ENCODE measurements at regions of chr4 and their contacts with region 1.

Region 1: DNA sequence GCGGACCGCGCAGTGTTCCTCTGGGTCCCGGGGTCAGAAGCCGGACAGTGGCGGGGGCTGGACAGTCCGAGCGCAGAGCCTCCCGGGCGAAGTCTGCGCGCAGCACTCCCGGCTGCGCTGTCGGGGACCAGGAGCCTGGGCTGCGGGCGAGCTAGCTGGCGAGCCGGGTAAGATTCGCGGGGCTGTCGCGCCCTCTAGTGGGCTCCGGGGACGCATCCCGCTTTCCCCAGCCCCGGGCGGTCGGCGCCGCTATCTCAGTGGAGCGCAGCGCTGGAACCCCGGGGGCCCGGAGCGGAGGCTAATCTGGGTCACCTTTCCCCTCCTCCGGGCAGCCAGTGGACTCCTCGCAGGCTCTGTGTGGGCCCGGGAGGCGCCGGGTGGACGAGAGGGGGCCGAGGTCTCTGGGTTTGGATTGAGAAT is 4.2 kb downstream of the PDGFRA start:
- DNase-seq: peak; percentile 51 to 70 (median 63)
- H3K4me3 ChIP-seq: peak overlapping the region; percentile 64
- H3K4me3 Mint-ChIP-seq: peak overlapping the region; percentile 71 to 93 (median 82)
- H3K27ac ChIP-seq: no peak overlapping the region
- H3K27ac Mint-ChIP-seq: no peak overlapping the region
- H3K4me1 ChIP-seq: peaks cover 10% of the 10 kb centered on the region
- H3K4me1 Mint-ChIP-seq: peaks cover 12 to 27% (median 15%) of the 10 kb centered on the region in 3 donors
- H3K27me3 ChIP-seq: peaks cover 37% of the 10 kb centered on the region
- H3K27me3 Mint-ChIP-seq: peaks cover 51 to 62% of the 10 kb centered on the region in 2 donors

Region 2: DNA sequence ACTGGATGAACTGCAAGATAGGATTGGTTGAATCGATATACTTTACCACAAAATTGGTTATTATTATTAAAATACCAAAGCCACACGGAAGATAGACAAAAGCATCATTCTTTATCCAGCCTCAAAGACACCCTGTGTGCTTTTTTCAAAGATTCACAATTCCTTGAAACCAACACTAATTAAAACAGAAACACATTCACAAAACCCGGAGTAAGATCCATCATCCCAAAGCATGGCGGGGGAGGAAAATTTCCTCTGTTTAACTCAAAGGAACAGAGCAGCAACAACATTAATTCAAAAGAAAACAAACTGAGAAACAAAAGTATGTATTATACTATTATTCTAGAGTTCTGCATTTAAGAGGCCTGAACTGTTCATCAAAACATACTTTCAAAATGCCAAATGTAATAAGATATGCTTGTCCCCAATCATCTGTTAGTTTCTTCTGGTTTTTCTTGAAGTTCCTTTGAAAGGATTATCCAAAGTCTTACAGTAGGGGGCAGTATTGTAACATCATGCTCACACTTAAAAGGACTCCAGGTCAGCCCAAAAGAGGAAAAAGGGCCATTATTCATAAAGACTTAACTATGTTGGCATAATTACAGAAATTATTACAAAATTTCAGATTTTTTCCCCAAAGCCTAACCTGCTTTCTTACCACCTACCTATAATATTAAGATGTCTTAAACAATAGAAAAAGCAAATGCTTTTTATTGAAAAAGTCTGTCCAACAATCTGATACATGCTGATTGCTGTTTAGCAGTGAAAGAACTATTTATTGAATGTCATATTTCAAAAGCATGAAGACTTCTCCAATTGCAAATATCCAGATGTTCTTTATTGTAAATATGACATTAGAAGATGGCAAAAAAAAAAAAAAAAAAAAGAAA is 1036.2 kb before region 1 on chr4:
- CTCF ChIA-PET with region 1: interaction called, 13 read pairs
- POLR2A ChIA-PET with region 1: no interaction called
- DNase-seq: peak in 2 of 5 donors; percentile 31 to 41
- H3K4me3 ChIP-seq: no peak overlapping the region
- H3K4me3 Mint-ChIP-seq: no peak overlapping the region
- H3K27ac ChIP-seq: no peak overlapping the region
- H3K27ac Mint-ChIP-seq: no peak overlapping the region
- H3K4me1 ChIP-seq: no peaks in the 10 kb centered on the region
- H3K4me1 Mint-ChIP-seq: no peaks in the 10 kb centered on the region
- H3K27me3 ChIP-seq: no peaks in the 10 kb centered on the region
- H3K27me3 Mint-ChIP-seq: no peaks in the 10 kb centered on the region

Region 3: DNA sequence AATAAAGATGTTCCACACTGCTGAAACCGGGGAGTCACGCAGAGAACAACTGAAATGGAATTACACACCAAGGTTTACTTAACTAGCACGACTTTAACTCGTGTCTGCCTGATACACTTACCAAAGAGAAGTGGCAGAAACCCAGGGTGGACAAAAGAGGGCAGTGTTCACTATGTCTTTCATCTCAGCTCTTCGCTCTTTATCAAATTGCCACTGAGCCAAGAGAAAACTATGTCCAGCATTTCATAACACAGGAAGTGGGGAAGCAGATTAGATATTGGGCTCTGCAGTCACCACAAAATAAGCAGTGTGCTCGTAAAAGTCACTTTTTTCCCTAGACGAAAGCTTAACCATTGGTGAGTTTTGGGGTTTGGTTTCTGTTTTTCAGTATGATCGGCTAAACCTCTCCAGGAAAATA is 324.6 kb before region 1 on chr4:
- CTCF ChIA-PET with region 1: interaction called, 25 read pairs
- POLR2A ChIA-PET with region 1: no interaction called
- DNase-seq: peak in 1 of 5 donors; percentile 15
- H3K4me3 ChIP-seq: no peak overlapping the region
- H3K4me3 Mint-ChIP-seq: peak overlapping the region in 2 of 7 donors; percentile 5 to 9
- H3K27ac ChIP-seq: no peak overlapping the region
- H3K27ac Mint-ChIP-seq: no peak overlapping the region
- H3K4me1 ChIP-seq: peaks cover 4% of the 10 kb centered on the region
- H3K4me1 Mint-ChIP-seq: peaks cover 8 to 18% (median 17%) of the 10 kb centered on the region in 3 donors
- H3K27me3 ChIP-seq: peaks cover 4% of the 10 kb centered on the region
- H3K27me3 Mint-ChIP-seq: peaks cover 20 to 61% of the 10 kb centered on the region in 2 donors

Region 4: DNA sequence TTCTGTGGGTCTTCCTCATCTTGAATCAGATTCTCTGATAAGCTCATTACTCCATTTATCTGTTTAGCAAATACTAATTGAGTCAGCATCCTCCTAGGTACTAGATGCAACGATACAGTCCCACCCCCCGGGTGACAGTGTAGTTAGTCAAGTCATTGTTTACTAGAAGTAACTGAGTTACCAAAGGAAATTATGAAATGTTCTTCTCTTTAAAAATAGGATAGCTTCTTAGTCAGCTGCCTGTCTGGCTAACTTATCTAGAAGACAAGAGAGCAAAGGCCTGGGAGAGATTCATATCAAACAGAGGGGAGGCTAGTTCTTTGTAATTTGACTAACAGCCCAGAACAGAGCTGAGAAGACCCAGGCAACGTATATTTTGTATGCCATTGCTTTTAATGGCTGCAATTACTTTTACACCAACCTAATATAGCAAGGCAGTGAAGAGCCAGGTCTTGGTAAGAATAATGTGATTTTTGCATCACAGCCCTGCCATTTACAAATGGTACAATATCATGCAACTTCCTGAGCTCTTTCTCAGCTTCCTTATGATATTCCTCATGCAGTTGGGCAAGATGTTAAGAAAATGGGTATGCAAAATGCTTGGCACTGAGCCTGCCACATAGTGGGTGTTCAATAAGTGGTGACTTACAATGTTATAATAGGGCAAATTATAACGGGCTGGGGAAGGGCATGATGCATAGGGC is 318.8 kb before region 1 on chr4:
- CTCF ChIA-PET with region 1: interaction called, 25 read pairs
- POLR2A ChIA-PET with region 1: no interaction called
- DNase-seq: no peak
- H3K4me3 ChIP-seq: no peak overlapping the region
- H3K4me3 Mint-ChIP-seq: no peak overlapping the region
- H3K27ac ChIP-seq: no peak overlapping the region
- H3K27ac Mint-ChIP-seq: no peak overlapping the region
- H3K4me1 ChIP-seq: no peaks in the 10 kb centered on the region
- H3K4me1 Mint-ChIP-seq: no peaks in the 10 kb centered on the region
- H3K27me3 ChIP-seq: no peaks in the 10 kb centered on the region
- H3K27me3 Mint-ChIP-seq: peaks cover under 1 to 7% of the 10 kb centered on the region in 2 donors

Region 5: GRCh38 chr4:53929955-53930798 is 303.1 kb before region 1 on chr4:
- CTCF ChIA-PET with region 1: interaction called, 82 read pairs
- POLR2A ChIA-PET with region 1: no interaction called
- DNase-seq: peak; percentile 22 to 62 (median 41)
- H3K4me3 ChIP-seq: no peak overlapping the region
- H3K4me3 Mint-ChIP-seq: no peak overlapping the region
- H3K27ac ChIP-seq: no peak overlapping the region
- H3K27ac Mint-ChIP-seq: no peak overlapping the region
- H3K4me1 ChIP-seq: no peaks in the 10 kb centered on the region
- H3K4me1 Mint-ChIP-seq: no peaks in the 10 kb centered on the region
- H3K27me3 ChIP-seq: no peaks in the 10 kb centered on the region
- H3K27me3 Mint-ChIP-seq: peaks cover 0 to 4% of the 10 kb centered on the region in 2 donors

Region 6: GRCh38 chr4:54217642-54218495 is 15.4 kb before region 1 on chr4:
- CTCF ChIA-PET with region 1: interaction called, 20 read pairs
- POLR2A ChIA-PET with region 1: no interaction called
- DNase-seq: peak; percentile 22 to 62 (median 45)
- H3K4me3 ChIP-seq: no peak overlapping the region
- H3K4me3 Mint-ChIP-seq: no peak overlapping the region
- H3K27ac ChIP-seq: no peak overlapping the region
- H3K27ac Mint-ChIP-seq: no peak overlapping the region
- H3K4me1 ChIP-seq: peaks cover 4% of the 10 kb centered on the region
- H3K4me1 Mint-ChIP-seq: peaks cover 5 to 7% (median 6%) of the 10 kb centered on the region in 3 donors
- H3K27me3 ChIP-seq: peaks cover 15% of the 10 kb centered on the region
- H3K27me3 Mint-ChIP-seq: peaks cover 27 to 51% of the 10 kb centered on the region in 2 donors

Region 7: DNA sequence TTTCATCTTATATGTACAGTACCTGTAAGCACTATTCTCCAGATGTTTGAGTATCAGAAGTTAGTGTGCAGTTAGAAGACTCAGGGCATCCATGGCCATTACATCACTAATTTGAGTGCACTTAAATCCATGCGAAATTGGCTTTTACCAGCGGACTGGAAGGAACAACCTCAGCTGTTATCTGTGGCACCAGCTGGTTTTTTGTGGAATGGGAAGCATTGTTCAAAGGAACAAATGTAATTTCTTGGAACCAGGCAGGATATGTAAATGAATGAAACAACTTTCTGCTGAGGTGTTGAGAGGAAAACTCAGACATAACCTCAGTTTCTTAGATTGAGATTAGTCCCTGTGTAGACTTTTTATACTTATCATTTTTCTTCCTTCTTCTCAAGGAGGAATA is 56.0 kb after region 1 on chr4:
- CTCF ChIA-PET with region 1: no interaction called
- POLR2A ChIA-PET with region 1: no interaction called
- DNase-seq: no peak
- H3K4me3 ChIP-seq: no peak overlapping the region
- H3K4me3 Mint-ChIP-seq: no peak overlapping the region
- H3K27ac ChIP-seq: no peak overlapping the region
- H3K27ac Mint-ChIP-seq: no peak overlapping the region
- H3K4me1 ChIP-seq: no peaks in the 10 kb centered on the region
- H3K4me1 Mint-ChIP-seq: no peaks in the 10 kb centered on the region
- H3K27me3 ChIP-seq: no peaks in the 10 kb centered on the region
- H3K27me3 Mint-ChIP-seq: peaks cover 0 to 4% of the 10 kb centered on the region in 2 donors